HCT116 (cell line): ENCODE measurements at regions of chr16 and their contacts with region 1.

Region 1: DNA sequence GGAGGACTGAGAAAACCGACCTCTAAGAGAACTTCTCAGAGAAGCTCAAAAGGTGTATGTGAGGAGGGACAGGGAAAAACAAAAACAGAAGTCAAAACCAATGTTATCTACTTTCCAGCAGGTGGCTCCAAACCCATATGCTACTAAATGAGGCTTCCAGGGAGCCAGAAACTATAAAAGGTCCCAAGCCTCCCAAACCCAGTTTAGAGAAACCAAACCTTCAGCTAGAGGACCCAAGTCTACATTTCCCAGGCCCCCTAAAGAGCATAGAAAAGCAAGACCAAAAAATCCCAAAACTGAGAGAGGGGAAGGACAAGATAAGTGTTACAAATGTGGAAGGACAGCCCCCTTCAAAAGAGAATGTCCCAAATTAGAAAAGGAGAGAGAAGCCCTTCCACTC is 3.7 kb downstream of the HPR start:
- DNase-seq: peak; percentile 13
- ATAC-seq: peak; percentile 79
- H3K4me3 ChIP-seq: no peak overlapping the region
- H3K27ac ChIP-seq: no peak overlapping the region
- H3K4me1 ChIP-seq: no peaks in the 10 kb centered on the region
- H3K27me3 ChIP-seq: peaks cover 20% of the 10 kb centered on the region
- CTCF ChIP-seq: peak; percentile 53 to 64 (median 56); a peak in 5 of 6 replicates
- POLR2A ChIP-seq: no peak
- RAD21 ChIP-seq: peak; percentile 72

Region 2: DNA sequence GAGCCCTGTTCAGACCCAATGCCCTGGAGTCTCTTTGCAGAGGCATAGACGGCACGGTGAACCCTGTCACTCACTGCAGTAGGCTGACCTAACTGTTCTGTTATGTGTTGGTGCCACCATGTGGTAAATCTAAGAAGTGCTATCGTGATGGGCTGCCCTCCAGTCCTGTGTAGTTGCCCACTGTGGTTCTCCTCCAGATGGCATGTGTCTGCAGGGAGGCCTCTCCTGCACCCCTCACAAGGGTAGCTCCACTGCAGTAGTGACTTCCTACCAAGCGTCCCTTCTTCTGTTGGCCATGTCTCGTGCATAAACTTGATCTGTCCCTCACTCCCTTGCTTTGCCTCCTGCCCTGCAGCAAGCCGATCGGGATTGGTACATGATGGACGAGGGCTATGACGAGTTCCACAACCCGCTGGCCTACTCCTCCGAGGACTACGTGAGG is 32.7 kb after region 1 on chr16:
- CTCF ChIA-PET with region 1: interaction called, 6 read pairs
- POLR2A ChIA-PET with region 1: no interaction called
- RAD21 ChIA-PET with region 1: no interaction called
- intact Hi-C with region 1: loop called (anchors 1 kb)
- DNase-seq: peak; percentile 40
- ATAC-seq: peak; percentile 99
- H3K4me3 ChIP-seq: no peak overlapping the region
- H3K27ac ChIP-seq: no peak overlapping the region
- H3K4me1 ChIP-seq: peaks cover 6 to 9% of the 10 kb centered on the region in 2 experiments; a peak in 3 of 4 replicates
- H3K27me3 ChIP-seq: no peaks in the 10 kb centered on the region
- CTCF ChIP-seq: peak; percentile 31 to 59 (median 58); a peak in 5 of 6 replicates
- POLR2A ChIP-seq: no peak
- RAD21 ChIP-seq: peak; percentile 72